Esophagus squamous epithelium (tissue), 5 donors: ENCODE measurements at regions of chr10 and their contacts with region 1.

Region 1: DNA sequence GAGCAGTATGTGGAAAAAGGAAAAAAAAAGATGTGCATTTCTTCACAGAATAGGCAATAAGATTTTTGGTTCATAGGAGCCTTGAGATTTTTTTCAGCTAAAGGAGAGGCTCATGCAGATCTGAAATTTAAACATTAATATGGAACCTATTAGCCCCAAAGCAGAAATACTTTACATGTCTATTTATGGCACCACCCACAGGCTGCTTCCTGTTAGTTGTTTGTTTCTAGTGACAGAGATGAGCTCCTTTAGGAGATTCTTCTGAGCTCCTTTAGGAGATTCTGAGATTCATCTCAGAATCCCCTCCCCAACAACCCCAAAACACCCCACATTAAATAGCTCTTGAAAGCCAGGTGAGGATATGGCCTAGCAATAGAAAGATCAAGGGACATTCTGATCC is 27.9 kb upstream of the HPS1 start:
- DNase-seq: no peak
- H3K4me3 ChIP-seq: no peak overlapping the region
- H3K27ac ChIP-seq: no peak overlapping the region
- H3K4me1 ChIP-seq: no peaks in the 10 kb centered on the region
- H3K27me3 ChIP-seq: peaks cover 0 to 6% (median 0%) of the 10 kb centered on the region in 4 donors
- CTCF ChIP-seq: no peak
- POLR2A ChIP-seq: no peak

Region 2: DNA sequence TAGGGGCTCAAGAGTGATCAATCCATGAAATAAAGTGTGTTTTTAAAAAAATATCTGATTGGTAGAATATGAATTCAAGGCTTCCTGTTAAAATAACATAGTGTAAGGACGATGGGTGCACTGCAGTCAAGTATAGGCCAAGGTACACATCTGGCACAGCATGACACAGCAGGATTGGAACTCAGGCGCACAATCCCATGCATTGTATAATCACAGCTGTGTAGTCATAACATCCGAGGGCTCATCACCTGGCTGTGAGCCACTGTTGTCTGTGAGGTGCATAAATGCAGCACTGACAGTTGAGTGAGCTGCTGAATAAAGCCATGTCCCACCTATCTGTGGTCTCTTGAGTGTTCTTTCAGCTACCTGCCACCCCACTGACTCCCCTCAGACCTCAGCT is 114.4 kb after region 1 on chr10:
- intact Hi-C with region 1: no loop called
- DNase-seq: no peak
- H3K4me3 ChIP-seq: no peak overlapping the region
- H3K27ac ChIP-seq: no peak overlapping the region
- H3K4me1 ChIP-seq: peaks cover 0 to 14% (median 3%) of the 10 kb centered on the region in 3 donors
- H3K27me3 ChIP-seq: no peaks in the 10 kb centered on the region
- CTCF ChIP-seq: no peak
- POLR2A ChIP-seq: no peak

Region 3: DNA sequence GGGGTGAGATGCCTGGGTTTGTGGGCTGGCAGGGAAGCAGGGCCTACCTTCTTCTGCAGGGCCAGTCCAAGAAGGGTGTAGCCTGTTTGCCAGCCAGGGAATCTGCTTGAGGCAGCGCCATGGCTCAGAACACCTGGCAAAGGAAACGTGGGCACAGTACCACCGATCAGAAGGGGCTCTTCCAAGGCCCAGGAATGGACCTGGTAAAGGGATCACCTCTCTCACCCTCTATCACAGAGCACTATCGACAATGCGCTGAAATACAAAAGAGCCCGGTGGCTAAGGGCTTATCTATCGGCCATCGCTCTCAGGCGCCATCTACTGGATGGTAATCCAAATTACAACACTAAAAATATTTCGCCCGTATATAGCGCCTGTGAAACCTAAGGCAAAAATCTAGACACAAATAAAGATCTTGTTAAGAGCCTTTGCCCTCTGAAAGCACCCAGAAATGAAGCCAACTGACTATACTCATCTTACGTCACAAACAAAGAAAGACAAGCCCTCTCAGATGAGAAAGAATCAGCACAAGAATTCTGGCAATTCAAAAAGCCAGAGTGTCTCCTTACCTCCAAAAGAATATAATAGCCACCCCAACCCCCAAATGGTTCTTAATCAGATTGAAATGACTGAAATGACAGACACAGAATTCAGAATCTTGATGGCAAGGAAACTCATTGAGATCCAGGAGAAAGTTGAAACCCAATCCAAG is 189.9 kb after region 1 on chr10:
- intact Hi-C with region 1: loop called (anchors 10 kb)
- DNase-seq: no peak
- H3K4me3 ChIP-seq: no peak overlapping the region
- H3K27ac ChIP-seq: no peak overlapping the region
- H3K4me1 ChIP-seq: no peaks in the 10 kb centered on the region
- H3K27me3 ChIP-seq: no peaks in the 10 kb centered on the region
- CTCF ChIP-seq: peak in 5 of 6 experiments; percentile 6 to 49 (median 37)
- POLR2A ChIP-seq: no peak